Spleen (tissue), 13 donors: ENCODE measurements at regions of chr7 and their contacts with region 1.

Region 1: DNA sequence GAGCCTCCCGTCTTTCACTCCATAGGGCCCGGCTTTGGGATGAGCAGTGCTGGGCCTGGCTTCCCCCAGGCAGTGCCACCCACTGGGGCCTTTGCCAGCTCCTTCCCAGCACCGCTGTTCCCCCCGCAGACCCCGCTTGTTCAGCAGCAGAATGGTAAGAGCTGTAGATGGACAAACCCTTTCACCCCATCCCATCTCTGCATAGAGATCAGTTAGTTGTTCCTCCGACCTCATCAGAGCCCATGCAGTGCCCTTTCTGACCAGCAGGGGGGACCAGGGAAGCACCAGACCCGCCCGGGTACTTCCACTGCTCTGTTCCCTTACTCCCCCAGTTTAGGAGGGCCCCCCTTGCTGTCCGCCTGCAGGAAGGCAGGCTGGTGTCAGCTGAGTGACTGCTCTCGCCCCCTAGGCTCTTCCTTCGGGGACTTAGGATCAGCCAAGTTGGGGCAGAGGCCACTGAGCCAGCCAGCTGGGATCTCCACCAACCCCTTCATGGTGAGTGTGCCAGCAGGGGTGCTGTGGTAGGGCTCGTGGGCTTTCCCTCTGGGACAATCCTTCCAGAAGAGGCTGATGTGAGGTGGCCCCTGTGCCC is 9.8 kb downstream of the SAP25 start:
- DNase-seq: peak; percentile 95
- H3K4me3 ChIP-seq: no peak overlapping the region
- H3K27ac ChIP-seq: peak overlapping the region in 5 of 8 donors; percentile 16 to 66 (median 26)
- H3K4me1 ChIP-seq: peaks cover 26 to 57% (median 42%) of the 10 kb centered on the region in 6 donors
- H3K27me3 ChIP-seq: no peaks in the 10 kb centered on the region
- CTCF ChIP-seq: peak; percentile 90 to 99 (median 97)
- POLR2A ChIP-seq: no peak

Region 2: GRCh38 chr7:100469227-100470044 is 94.5 kb before region 1 on chr7:
- intact Hi-C with region 1: loop called (anchors 2 kb)
- DNase-seq: peak; percentile 96
- H3K4me3 ChIP-seq: no peak overlapping the region
- H3K27ac ChIP-seq: peak overlapping the region in 4 of 8 donors; percentile 19 to 57 (median 37)
- H3K4me1 ChIP-seq: peaks cover 31 to 94% (median 61%) of the 10 kb centered on the region in 6 donors
- H3K27me3 ChIP-seq: no peaks in the 10 kb centered on the region
- CTCF ChIP-seq: peak; percentile 89 to 99 (median 96)
- POLR2A ChIP-seq: no peak

Region 3: GRCh38 chr7:100478966-100479665 is 84.8 kb before region 1 on chr7 and contains the start of gene TSC22D4:
- intact Hi-C with region 1: loop called (anchors 2 kb)
- DNase-seq: peak; percentile 98
- H3K4me3 ChIP-seq: peak within 1 kb of the TSS; percentile 90 to 99 (median 96)
- H3K27ac ChIP-seq: peak within 1 kb of the TSS; percentile 88 to 99 (median 98)
- H3K4me1 ChIP-seq: peaks cover 37 to 78% (median 61%) of the 10 kb centered on the region in 6 donors
- H3K27me3 ChIP-seq: peaks cover 0 to 7% (median 0%) of the 10 kb centered on the region in 7 donors
- CTCF ChIP-seq: peak in 1 of 11 experiments; percentile 18
- POLR2A ChIP-seq: peak; percentile 8 to 89 (median 85)
- total RNA-seq, gene TSC22D4: 67.1 to 119 (median 98.8) TPM